ENCODE measurements at regions of chr17 and their contacts with region 1.

Region 1: GRCh38 chr17:47615766-47616424 is 33.8 kb upstream of the KPNB1 start:
- DNase-seq: no peak
- H3K4me3 Mint-ChIP-seq: no peak overlapping the region
- H3K27ac Mint-ChIP-seq: no peak overlapping the region
- H3K4me1 Mint-ChIP-seq: peaks cover 27% of the 10 kb centered on the region
- H3K27me3 Mint-ChIP-seq: no peaks in the 10 kb centered on the region

Region 2: DNA sequence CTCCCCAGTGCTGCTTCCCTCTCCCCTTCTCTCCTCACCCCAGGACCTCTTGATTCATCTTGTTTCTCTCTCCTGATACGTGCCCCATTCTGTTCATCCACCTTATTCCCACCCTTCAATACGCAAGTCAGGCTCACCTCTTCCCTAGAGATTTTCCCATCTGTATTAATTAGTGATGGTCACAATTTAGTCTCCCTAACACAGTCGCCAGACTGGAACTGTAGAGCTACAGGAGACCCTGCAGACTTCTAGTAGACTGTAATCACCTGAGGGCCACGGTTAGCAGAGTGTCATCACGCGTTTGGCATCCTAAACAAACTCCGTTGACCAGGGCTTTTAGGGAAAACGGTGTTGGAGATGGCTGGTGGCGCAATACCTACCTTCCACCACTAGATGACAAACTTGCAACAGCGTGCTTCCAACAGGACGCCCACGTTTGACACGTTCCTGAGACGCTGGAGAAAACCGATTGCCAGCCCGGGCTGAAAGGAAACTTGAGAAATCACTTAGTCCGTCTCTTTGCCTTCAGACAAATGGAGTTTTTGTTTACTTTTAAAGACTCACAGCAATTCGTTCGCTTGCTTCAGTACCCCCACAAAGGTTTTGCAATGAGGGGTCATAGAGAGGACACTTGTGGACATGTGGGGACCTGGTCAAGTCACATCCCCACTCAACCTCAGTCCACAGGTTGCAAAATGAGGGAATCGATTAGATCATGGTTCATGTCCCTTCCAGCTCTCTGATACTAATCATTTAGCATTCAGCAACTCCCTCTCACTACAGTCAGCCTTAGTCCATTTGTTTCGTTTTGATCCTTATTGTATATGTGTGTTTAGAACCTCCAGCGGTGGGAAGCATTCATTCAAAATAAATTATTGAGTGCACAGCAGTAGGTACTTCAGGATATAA is 386.1 kb before region 1 on chr17:
- intact Hi-C with region 1: loop called (anchors 1 kb)
- DNase-seq: peak; percentile 60
- H3K4me3 Mint-ChIP-seq: peak overlapping the region; percentile 47
- H3K27ac Mint-ChIP-seq: no peak overlapping the region
- H3K4me1 Mint-ChIP-seq: peaks cover 14% of the 10 kb centered on the region
- H3K27me3 Mint-ChIP-seq: peaks cover 10% of the 10 kb centered on the region

Region 3: DNA sequence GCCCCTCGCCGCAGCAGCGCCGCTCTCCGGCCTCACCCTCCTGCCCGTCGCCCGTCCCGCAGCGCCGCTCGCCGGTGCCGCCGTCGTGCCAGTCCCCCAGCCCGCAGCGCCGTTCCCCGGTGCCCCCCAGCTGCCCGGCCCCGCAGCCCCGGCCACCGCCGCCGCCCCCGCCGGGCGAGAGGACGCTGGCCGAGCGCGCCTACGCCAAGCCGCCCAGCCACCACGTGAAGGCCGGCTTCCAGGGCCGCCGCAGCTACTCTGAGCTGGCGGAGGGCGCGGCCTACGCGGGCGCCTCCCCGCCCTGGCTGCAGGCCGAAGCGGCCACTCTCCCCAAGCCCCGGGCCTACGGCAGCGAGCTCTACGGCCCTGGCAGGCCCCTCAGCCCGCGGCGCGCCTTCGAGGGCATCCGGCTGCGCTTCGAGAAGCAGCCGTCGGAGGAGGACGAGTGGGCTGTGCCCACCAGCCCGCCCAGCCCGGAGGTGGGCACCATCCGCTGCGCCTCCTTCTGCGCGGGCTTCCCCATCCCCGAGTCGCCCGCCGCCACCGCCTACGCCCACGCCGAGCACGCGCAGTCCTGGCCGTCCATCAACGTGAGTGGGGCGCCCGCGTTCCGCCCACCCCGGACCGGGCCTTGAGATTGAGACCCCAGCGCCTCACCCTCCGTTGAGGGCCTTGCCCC is 93.1 kb after region 1 on chr17:
- intact Hi-C with region 1: no loop called
- DNase-seq: no peak
- H3K4me3 Mint-ChIP-seq: no peak overlapping the region
- H3K27ac Mint-ChIP-seq: no peak overlapping the region
- H3K4me1 Mint-ChIP-seq: peaks cover 71% of the 10 kb centered on the region
- H3K27me3 Mint-ChIP-seq: no peaks in the 10 kb centered on the region

Region 4: DNA sequence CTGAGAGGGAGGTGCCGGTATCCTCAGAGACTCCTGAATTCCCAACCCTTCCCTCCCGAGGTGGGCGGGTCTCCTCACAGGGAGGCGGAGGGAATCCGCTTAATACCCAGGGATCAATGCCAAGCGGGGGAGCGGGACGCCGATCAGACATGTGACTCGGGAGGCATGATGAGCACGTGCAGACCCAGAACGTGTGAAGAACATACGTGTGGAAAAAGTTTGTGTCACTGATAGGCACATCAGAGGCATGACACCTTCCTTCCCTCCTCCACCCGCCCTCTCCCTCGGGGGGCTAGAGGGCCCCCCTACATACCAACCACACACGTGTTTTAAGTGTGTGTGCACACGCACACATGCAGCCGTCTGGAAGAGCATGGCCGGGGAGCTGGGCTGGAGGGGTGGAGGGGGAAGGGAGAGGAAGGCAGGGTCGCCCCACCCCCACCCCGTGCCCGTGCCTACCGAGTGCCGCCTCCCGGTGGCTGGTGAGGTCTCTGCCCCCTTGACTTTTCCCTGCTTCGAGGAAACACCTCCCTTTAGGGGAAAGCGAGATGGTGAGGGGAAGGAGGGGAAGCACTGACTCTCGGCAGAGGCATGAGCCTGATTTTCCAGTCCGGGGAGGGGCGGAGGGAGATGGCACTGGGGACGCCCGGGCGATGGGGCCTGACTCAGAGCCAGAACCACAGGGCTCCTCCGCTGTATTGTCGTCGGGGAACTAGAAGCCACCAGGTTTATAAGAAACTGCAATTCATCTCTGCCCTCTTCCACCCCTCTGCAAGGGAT is 105.0 kb after region 1 on chr17:
- intact Hi-C with region 1: no loop called
- DNase-seq: peak; percentile 85
- H3K4me3 Mint-ChIP-seq: peak overlapping the region; percentile 78
- H3K27ac Mint-ChIP-seq: peak overlapping the region; percentile 95
- H3K4me1 Mint-ChIP-seq: peaks cover 83% of the 10 kb centered on the region
- H3K27me3 Mint-ChIP-seq: no peaks in the 10 kb centered on the region